Adrenal gland (tissue), 19 donors: ENCODE measurements at regions of chr1 and their contacts with region 1.

Region 1: GRCh38 chr1:211775170-211775569 is 55.4 kb downstream of the LPGAT1 start:
- DNase-seq: no peak
- H3K4me3 ChIP-seq: no peak overlapping the region
- H3K27ac ChIP-seq: no peak overlapping the region
- H3K4me1 ChIP-seq: no peaks in the 10 kb centered on the region
- H3K27me3 ChIP-seq: no peaks in the 10 kb centered on the region
- CTCF ChIP-seq: no peak
- POLR2A ChIP-seq: no peak

Region 2: GRCh38 chr1:211724687-211725196 is 50.4 kb before region 1 on chr1:
- intact Hi-C with region 1: loop called in 1 of 2 experiments (anchors 1 kb)
- DNase-seq: peak in 2 of 7 donors; percentile 18 to 62
- H3K4me3 ChIP-seq: no peak overlapping the region
- H3K27ac ChIP-seq: no peak overlapping the region
- H3K4me1 ChIP-seq: peaks cover 0 to 6% of the 10 kb centered on the region in 2 donors
- H3K27me3 ChIP-seq: no peaks in the 10 kb centered on the region
- CTCF ChIP-seq: no peak
- POLR2A ChIP-seq: no peak

Region 3: GRCh38 chr1:211874521-211875347 is 99.6 kb after region 1 on chr1:
- intact Hi-C with region 1: no loop called
- DNase-seq: no peak
- H3K4me3 ChIP-seq: no peak overlapping the region
- H3K27ac ChIP-seq: no peak overlapping the region
- H3K4me1 ChIP-seq: no peaks in the 10 kb centered on the region
- H3K27me3 ChIP-seq: no peaks in the 10 kb centered on the region
- CTCF ChIP-seq: no peak
- POLR2A ChIP-seq: no peak